ENCODE measurements at regions of chr4 and their contacts with region 1.

Region 1: GRCh38 chr4:56505269-56506130 is at the start of gene ARL9:
- DNase-seq: peak; percentile 83
- total RNA-seq, gene ARL9: 0.32 to 0.48 TPM

Region 2: GRCh38 chr4:56540826-56541225 is 35.3 kb after region 1 on chr4:
- intact Hi-C with region 1: loop called in 1 of 2 experiments (anchors 1 kb)
- DNase-seq: no peak

Measured in posterior vena cava (tissue), 2 donors.